Activated CD8-positive, alpha-beta T cell treated with anti-CD3 and anti-CD28 coated beads for 36 hours (primary cell): ENCODE measurements at regions of chr3 and their contacts with region 1.

Region 1: DNA sequence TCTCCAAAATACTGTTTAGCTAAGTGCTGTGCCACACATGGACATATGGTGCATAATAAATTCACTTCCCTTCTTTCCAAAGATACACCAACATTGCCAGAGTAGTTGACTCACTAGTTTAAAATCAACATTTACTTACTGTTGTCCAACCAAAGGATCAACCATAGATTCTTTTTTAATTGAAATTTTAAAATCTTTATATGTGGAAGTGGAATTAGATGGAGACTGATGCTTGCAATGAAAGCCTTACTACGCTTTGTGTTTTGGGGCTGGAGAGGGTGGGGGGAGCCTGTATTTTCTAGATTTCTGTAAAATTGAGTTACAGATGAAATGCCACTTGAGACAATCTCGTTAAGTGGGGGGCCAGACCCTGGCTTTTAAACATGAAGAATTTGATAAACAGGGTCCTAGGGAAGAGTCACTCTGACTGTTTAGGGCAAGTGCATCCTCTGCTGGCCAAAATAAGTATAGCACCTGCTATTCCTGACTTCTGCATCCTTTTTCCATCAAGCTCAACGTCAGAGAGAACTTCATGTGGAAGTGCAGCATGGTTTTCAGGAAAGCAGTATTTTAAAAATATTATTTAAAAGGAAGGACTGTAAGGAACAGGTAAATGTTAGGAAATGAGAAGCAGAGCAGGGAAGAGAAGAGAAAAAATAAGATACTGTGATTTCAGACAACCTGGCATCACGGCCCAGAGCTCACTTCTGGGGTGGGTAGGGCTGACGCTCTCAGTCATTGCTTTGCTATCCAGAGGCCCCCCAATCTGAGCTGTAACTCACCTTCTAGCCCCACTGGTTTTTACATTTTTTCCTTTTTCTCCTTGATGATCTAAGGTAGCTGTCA is 76.7 kb downstream of the BOC start:
- DNase-seq: peak; percentile 69
- ATAC-seq: peak; percentile 66
- H3K4me3 Mint-ChIP-seq: no peak overlapping the region
- H3K27ac Mint-ChIP-seq: no peak overlapping the region
- H3K4me1 Mint-ChIP-seq: no peaks in the 10 kb centered on the region
- H3K27me3 Mint-ChIP-seq: no peaks in the 10 kb centered on the region
- CTCF ChIP-seq: peak; percentile 97

Region 2: DNA sequence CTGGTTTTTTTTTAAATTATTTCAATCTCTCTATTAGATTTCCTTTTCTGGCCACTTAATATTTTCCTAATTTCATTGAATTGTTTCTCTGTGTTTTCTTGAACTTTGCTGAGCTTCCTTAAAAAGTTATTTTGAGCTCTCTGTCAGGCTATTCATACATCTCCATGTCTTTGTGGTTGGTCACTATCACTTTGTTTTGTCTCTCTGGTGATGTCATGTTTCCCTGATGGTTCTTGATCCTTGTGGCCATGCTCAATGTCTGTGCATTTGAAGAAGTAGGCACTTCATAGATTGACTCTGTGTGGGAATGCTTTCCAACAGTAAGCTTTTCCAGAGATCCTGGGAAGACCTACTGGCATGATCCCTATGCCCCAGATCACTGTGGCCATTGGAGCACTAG is 331.7 kb before region 1 on chr3:
- CTCF ChIA-PET with region 1: no interaction called
- POLR2A ChIA-PET with region 1: no interaction called
- intact Hi-C with region 1: no loop called
- DNase-seq: no peak
- ATAC-seq: no peak
- H3K4me3 Mint-ChIP-seq: no peak overlapping the region
- H3K27ac Mint-ChIP-seq: no peak overlapping the region
- H3K4me1 Mint-ChIP-seq: peaks cover 26% of the 10 kb centered on the region
- H3K27me3 Mint-ChIP-seq: no peaks in the 10 kb centered on the region
- CTCF ChIP-seq: no peak

Region 3: DNA sequence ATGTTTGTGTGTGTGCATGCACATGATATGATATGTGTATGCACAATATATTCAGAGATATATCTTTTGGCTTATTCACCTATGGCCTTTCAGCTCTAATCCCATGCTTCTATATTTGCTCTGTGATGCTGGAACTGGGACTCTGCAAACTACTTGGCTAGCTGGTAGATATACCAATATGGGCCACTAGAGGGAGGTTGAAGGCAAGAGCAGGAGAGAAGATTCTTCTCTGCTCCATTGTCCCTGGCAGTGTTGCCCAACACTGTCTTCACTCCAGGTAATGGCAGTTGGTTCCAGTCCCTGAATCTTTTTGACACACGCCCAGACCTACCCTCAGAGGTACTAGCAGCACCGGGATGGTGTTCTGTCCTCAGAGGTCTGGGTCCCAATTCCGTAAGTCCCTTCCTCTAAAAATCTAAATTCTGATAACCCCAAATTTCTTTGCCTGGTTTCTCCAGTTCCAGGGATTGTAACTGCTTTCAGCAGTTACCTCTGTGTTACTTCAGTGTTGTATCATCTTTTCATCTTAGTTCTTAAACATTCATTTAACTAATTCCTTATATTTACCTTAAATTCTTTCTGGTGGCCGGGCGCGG is 252.5 kb before region 1 on chr3:
- CTCF ChIA-PET with region 1: interaction called, 16 read pairs
- POLR2A ChIA-PET with region 1: no interaction called
- intact Hi-C with region 1: no loop called
- DNase-seq: peak; percentile 41
- ATAC-seq: peak; percentile 81
- H3K4me3 Mint-ChIP-seq: no peak overlapping the region
- H3K27ac Mint-ChIP-seq: no peak overlapping the region
- H3K4me1 Mint-ChIP-seq: no peaks in the 10 kb centered on the region
- H3K27me3 Mint-ChIP-seq: no peaks in the 10 kb centered on the region
- CTCF ChIP-seq: peak; percentile 84

Region 4: GRCh38 chr3:113051302-113051711 is 236.7 kb before region 1 on chr3:
- CTCF ChIA-PET with region 1: interaction called, 41 read pairs
- POLR2A ChIA-PET with region 1: no interaction called
- intact Hi-C with region 1: loop called (anchors 1 kb)
- DNase-seq: peak; percentile 93
- ATAC-seq: peak; percentile 99
- H3K4me3 Mint-ChIP-seq: no peak overlapping the region
- H3K27ac Mint-ChIP-seq: no peak overlapping the region
- H3K4me1 Mint-ChIP-seq: peaks cover 2% of the 10 kb centered on the region
- H3K27me3 Mint-ChIP-seq: no peaks in the 10 kb centered on the region
- CTCF ChIP-seq: peak; percentile 91

Region 5: GRCh38 chr3:113136071-113136470 is 152.0 kb before region 1 on chr3:
- CTCF ChIA-PET with region 1: interaction called, 23 read pairs
- POLR2A ChIA-PET with region 1: no interaction called
- intact Hi-C with region 1: loop called (anchors 1 kb)
- DNase-seq: no peak
- ATAC-seq: no peak
- H3K4me3 Mint-ChIP-seq: no peak overlapping the region
- H3K27ac Mint-ChIP-seq: no peak overlapping the region
- H3K4me1 Mint-ChIP-seq: peaks cover 3% of the 10 kb centered on the region
- H3K27me3 Mint-ChIP-seq: no peaks in the 10 kb centered on the region
- CTCF ChIP-seq: peak; percentile 41

Region 6: DNA sequence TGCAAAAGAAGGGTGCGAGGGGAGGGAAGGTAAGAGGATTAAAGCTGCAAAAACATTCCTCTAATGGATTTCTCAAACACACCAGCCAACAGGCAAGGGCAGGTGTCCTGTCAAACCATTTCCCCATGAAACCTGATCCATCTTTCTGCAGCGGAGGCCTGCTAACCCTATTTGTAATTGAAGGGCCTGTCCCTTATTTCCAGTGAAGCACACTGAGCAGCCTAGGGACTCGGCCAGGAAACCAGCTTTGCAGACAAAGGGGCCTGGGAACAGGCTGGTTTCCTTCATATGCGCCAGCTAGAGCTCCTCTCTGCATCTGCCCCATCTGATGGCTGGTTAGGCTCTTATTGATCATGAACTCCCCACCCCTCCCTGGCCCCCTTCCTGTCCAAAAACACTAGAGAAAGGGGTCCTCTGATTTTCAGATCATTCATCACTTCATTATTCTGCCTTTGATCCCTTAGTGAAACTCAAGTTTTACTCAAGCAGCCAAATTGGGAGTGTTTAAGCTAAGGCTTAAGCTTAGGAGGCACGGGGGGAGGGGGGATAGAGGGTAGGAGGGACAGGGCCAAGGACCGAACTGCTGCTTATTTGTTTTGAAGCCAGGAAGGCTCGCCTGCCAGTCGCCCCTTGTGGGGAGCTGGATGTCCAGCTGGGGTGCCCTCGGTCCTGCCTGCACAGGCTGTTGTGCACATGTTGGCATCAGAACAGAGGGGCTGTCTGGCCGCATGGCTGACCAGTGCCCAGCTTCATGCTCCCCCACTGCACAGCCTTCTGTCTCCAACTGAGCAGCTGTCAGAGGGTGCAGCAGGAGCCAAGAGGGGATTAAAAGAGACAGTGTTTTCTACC is 23.5 kb before region 1 on chr3:
- CTCF ChIA-PET with region 1: interaction called, 14 read pairs
- POLR2A ChIA-PET with region 1: no interaction called
- intact Hi-C with region 1: no loop called
- DNase-seq: no peak
- ATAC-seq: no peak
- H3K4me3 Mint-ChIP-seq: no peak overlapping the region
- H3K27ac Mint-ChIP-seq: no peak overlapping the region
- H3K4me1 Mint-ChIP-seq: no peaks in the 10 kb centered on the region
- H3K27me3 Mint-ChIP-seq: no peaks in the 10 kb centered on the region
- CTCF ChIP-seq: no peak

Region 7: DNA sequence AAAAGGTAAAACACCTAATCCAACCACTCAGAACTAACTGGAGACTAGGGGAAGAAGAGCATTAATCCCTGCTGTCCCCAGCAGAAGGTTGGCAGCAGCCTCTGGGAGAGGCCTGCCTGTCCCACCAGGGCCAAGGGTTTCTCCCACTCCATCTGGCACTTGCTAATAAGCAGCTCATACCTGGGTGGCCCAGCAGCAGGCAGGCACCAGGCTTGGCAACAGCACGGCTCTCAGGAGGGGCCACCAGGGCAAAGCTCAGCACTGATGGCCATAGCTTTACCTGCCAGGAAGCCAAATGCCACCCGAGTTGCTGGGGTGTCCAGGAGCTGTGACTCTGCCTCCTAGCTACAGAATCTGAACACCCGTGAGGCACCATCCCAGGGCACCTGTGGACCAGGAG is 18.4 kb before region 1 on chr3:
- CTCF ChIA-PET with region 1: interaction called, 14 read pairs
- POLR2A ChIA-PET with region 1: no interaction called
- intact Hi-C with region 1: no loop called
- DNase-seq: no peak
- ATAC-seq: no peak
- H3K4me3 Mint-ChIP-seq: no peak overlapping the region
- H3K27ac Mint-ChIP-seq: no peak overlapping the region
- H3K4me1 Mint-ChIP-seq: no peaks in the 10 kb centered on the region
- H3K27me3 Mint-ChIP-seq: no peaks in the 10 kb centered on the region
- CTCF ChIP-seq: no peak

Region 8: DNA sequence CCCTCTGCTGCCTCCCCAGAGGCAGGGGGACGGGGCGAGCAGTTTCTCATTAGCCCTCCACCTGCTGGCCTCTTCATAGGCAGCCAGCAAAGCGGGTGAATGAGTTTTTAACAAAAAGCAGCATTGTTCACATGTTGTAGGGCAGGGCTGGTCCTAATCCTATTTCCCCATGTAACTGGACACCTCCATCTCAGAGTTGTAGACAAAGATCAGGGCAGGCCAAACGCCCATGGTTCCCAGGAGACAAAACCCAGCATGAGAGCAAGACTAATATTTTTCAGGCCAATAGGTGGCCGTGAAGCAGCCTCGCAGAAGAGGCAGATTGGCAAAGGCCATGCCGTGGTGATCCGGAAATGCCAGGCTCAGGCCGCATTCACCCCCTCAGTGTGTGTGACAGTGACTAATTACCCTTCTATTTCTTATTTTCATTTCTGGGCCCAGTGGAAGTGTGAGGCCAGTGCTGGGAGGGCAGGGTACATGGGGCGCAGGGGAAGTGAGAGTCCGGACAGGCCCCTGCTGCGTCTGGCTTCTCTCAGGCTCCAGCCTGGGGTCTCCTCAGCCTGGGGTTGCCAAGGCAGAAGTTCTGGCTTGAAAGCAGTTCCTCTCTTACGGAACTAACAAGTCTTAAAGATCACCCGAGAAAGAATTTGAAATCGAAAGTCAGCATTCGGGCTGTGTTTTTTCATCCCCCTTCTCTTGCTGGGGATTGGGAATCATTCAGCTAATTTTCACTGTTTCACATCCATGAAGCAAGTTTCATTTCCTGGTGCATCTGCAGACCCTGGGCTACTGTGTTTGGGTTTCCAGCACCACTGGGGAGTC is 11.9 kb before region 1 on chr3:
- CTCF ChIA-PET with region 1: interaction called, 15 read pairs
- POLR2A ChIA-PET with region 1: no interaction called
- intact Hi-C with region 1: no loop called
- DNase-seq: peak; percentile 7
- ATAC-seq: peak; percentile 65
- H3K4me3 Mint-ChIP-seq: peak overlapping the region; percentile 12
- H3K27ac Mint-ChIP-seq: no peak overlapping the region
- H3K4me1 Mint-ChIP-seq: peaks cover 7% of the 10 kb centered on the region
- H3K27me3 Mint-ChIP-seq: peaks cover 1% of the 10 kb centered on the region
- CTCF ChIP-seq: no peak

Region 9: GRCh38 chr3:114005481-114005880 is 717.5 kb after region 1 on chr3:
- CTCF ChIA-PET with region 1: no interaction called
- POLR2A ChIA-PET with region 1: no interaction called
- intact Hi-C with region 1: no loop called
- DNase-seq: no peak
- ATAC-seq: no peak
- H3K4me3 Mint-ChIP-seq: no peak overlapping the region
- H3K27ac Mint-ChIP-seq: no peak overlapping the region
- H3K4me1 Mint-ChIP-seq: no peaks in the 10 kb centered on the region
- H3K27me3 Mint-ChIP-seq: no peaks in the 10 kb centered on the region
- CTCF ChIP-seq: no peak